Stomach (tissue), 19 donors: ENCODE measurements at regions of chr3 and their contacts with region 1.

Region 1: DNA sequence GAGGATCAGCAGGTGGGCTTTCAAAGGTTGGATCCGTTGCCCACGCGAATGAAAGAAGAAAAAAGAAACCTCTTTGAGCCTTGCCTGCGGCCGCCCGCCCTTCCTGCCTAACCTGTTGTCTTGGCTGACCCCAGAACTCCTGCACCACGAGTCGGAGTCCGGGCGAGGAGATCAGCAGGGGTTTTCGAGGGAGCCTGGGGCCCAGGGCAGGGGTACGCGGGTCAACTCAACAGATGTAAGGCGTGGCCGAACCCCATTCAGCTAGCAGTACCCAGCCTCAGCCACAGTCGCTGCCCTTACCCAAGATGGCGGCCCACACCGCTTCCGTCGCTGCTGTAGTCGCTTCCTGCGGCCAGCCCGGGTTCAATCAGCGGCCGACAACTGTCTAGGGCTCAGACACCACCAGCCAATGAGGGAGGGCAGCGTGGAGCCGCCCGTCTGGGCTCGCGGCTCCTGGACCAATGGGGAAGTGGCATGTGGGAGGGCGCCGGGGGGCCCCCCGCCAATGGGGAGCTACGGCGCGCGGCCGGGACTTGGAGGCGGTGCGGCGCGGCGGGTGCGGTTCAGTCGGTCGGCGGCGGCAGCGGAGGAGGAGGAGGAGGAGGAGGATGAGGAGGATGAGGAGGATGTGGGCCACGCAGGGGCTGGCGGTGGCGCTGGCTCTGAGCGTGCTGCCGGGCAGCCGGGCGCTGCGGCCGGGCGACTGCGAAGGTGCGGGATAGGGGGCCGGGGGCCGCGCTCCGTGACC is at the start of gene MANF:
- DNase-seq: peak; percentile 98 to 100
- H3K4me3 ChIP-seq: peak within 1 kb of the TSS; percentile 84 to 90 (median 88)
- H3K27ac ChIP-seq: peak within 1 kb of the TSS; percentile 85 to 97 (median 95)
- H3K4me1 ChIP-seq: peaks cover 44 to 60% (median 59%) of the 10 kb centered on the region in 4 donors
- H3K27me3 ChIP-seq: no peaks in the 10 kb centered on the region
- CTCF ChIP-seq: peak in 1 of 7 experiments; percentile 34
- EP300 ChIP-seq: no peak
- POLR2A ChIP-seq: peak in 2 of 4 donors; percentile 7 to 10
- total RNA-seq, gene MANF: 0.58 to 76.4 (median 30.4) TPM

Region 2: DNA sequence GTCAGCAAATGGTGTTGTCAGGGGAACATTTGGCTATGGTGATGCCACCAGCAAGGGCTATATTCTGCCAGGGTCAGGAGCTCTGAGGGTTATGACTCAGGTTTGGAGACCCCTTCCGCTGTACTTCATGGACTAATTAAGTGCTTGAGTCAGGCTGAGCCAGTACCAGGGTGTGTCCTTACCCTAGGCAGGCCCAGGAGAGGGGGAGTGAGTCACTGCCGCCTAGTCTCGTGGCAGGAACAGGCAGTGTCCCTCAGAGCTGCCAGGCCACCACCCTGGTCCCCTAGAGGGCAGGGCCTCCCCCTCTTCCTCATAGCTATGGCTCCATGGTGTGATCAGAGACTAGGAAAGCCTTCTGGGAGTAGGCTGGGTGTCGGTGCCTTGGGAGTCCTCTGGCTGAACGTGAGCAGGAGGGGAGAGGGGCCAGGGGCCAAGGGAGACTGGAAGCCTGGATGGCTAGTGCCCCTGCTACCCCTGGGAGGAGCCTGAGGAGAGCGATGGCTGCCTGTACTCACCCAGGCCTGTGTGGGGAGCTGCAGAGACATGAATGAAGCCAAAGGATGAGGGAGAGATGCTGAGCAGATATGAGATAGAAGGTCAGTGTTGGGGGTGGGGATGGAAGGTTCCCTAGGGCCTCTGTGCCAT is 757.4 kb before region 1 on chr3:
- intact Hi-C with region 1: loop called (anchors 10 kb)
- DNase-seq: peak; percentile 38 to 45
- H3K4me3 ChIP-seq: no peak overlapping the region
- H3K27ac ChIP-seq: peak overlapping the region in 1 of 5 donors; percentile 62
- H3K4me1 ChIP-seq: peaks cover 18 to 93% (median 29%) of the 10 kb centered on the region in 4 donors
- H3K27me3 ChIP-seq: no peaks in the 10 kb centered on the region
- CTCF ChIP-seq: no peak
- EP300 ChIP-seq: no peak
- POLR2A ChIP-seq: no peak